Endothelial cell of umbilical vein (primary cell): ENCODE measurements at regions of chr2 and their contacts with region 1.

Region 1: DNA sequence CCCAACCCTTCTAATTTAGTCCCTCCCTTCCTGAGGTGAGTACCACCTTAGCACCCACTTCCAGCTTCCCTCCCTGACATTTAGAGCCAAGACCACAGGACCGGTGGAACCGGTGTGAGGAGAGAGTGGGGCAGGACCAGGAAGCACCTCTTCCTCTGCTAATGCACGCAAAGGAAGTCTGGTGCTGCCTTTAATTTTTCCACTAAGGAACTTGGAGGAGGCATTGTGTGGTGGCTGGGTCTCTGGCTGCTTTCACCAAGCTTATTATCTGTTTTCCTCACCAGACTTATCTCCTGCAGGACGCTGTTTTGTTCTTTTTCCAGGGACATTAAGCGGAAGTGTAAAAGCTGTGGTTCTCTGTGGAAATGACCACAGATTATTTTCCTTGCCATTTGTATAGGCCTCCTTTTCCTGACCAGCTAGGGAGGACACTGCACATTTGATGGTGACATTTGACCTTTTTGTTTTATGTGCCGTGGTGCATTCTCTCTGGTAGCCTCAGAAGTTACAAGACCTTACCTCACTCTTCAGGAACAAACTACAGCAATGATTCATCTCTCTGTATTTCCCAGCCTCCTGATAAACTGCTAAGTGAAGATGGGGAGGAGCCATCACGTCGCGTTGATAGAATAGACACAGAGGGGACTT is 39.8 kb upstream of the SPTBN1 start:
- DNase-seq: peak; percentile 94
- H3K4me3 ChIP-seq: no peak overlapping the region
- H3K27ac ChIP-seq: peak overlapping the region; percentile 74
- H3K4me1 ChIP-seq: peaks cover 44% of the 10 kb centered on the region
- H3K27me3 ChIP-seq: no peaks in the 10 kb centered on the region
- CTCF ChIP-seq: no peak
- POLR2A ChIP-seq: no peak

Region 2: DNA sequence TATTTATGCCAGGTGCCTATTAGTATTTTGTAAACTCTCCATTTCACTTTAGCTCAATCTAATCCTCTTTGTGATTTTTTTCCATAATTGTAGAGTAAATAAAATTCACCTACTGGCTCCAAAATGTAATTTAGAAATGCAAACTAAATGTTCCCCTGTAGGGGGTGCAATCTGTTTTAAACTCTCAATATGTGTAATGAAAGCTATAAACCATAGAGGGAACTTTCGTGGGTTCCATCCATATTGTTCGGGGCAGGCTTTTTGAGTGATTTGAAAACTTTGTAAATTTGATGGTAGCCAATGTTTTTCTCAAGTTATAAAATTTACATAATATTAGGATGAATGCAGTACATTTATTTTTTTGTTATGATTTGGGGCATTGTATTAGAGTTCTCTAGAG is 209.7 kb before region 1 on chr2:
- CTCF ChIA-PET with region 1: no interaction called
- POLR2A ChIA-PET with region 1: no interaction called
- dilution Hi-C with region 1: no loop called
- intact Hi-C with region 1: loop called (anchors 5 kb)
- DNase-seq: peak; percentile 58
- H3K4me3 ChIP-seq: no peak overlapping the region
- H3K27ac ChIP-seq: no peak overlapping the region
- H3K4me1 ChIP-seq: peaks cover 7% of the 10 kb centered on the region
- H3K27me3 ChIP-seq: no peaks in the 10 kb centered on the region
- CTCF ChIP-seq: peak; percentile 29 to 33
- POLR2A ChIP-seq: no peak

Region 3: DNA sequence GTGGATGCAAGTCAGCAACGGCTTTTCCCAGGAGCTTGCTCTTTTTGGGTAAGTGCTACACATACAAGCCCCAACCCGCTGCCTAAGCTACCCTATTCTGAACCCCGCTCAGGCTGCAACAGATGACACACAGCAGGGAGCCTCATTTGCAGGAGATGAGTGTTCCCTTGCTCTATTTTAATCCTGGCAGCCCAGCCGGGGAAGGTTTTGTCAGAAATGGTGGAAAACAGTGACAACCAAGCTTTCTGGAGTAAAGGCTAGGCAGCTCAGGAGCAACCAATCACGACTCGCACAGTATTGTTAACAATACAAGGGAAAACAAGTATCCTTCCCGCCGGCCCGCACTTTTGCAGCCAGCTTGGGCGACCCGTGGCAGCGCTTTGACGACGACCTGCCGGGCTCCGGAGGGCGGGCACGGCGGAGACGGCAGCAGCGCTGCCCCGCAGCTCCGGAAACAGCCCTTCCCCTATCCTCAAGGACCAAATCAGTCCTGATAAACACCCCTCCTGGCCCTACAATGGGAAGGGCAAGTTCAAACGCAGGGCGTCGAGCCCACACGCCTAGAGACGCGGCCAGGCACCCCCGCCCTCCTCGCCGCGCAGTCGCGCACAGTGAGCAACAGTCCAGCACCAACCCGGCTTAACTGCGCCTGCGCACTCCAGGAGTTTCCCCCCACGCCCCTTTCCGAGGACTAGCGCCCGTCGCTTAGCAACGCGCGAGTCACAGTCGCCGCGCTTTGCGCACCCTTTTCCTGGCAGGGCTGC is 85.9 kb before region 1 on chr2:
- CTCF ChIA-PET with region 1: no interaction called
- POLR2A ChIA-PET with region 1: no interaction called
- dilution Hi-C with region 1: no loop called
- intact Hi-C with region 1: loop called (anchors 5 kb)
- DNase-seq: peak; percentile 97
- H3K4me3 ChIP-seq: peak overlapping the region; percentile 7 to 54 (median 44)
- H3K27ac ChIP-seq: peak overlapping the region; percentile 23
- H3K4me1 ChIP-seq: peaks cover 16% of the 10 kb centered on the region
- H3K27me3 ChIP-seq: no peaks in the 10 kb centered on the region
- CTCF ChIP-seq: no peak
- POLR2A ChIP-seq: peak; percentile 80

Region 4: DNA sequence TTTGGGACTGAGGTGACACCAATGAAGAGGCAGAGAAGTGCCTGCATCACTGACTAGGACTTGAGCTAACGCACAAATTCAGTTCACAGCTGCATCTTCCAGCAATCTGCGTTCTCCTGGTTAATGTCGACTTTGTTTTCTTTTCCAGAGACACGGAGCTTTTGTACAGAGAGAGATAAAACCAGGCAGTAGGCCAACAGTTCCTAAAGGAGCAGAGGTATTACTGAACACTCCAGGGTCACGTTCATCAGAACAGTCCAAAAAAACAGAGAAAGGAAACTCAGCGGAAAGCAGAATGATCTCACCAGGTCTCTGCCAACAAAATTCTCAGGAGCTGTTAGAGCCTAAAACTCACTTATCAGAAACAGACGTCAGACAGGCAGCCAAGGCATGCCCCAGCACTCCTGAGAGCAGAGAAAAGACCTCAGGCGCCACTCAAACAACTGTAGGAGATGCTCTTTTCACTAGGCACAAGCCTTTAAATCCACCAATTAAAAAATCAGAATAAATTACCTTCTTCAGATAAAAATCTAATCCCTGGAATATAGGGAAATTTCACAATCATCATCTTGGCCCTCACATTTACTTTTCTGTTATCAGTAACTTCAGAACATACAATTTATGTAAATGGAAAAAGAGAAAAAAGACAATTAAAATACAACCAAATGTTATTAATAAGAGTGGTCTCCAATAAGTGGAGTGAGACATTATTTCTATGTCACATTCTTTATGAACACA is 56.1 kb before region 1 on chr2:
- CTCF ChIA-PET with region 1: interaction called, 3 read pairs
- POLR2A ChIA-PET with region 1: no interaction called
- dilution Hi-C with region 1: no loop called
- intact Hi-C with region 1: loop called (anchors 5 kb)
- DNase-seq: peak; percentile 94
- H3K4me3 ChIP-seq: peak overlapping the region in 1 of 3 experiments; percentile 14
- H3K27ac ChIP-seq: peak overlapping the region; percentile 43
- H3K4me1 ChIP-seq: peaks cover 15% of the 10 kb centered on the region
- H3K27me3 ChIP-seq: no peaks in the 10 kb centered on the region
- CTCF ChIP-seq: no peak
- POLR2A ChIP-seq: no peak

Region 5: GRCh38 chr2:54429811-54430551 is 13.7 kb after region 1 on chr2:
- CTCF ChIA-PET with region 1: interaction called, 3 read pairs
- POLR2A ChIA-PET with region 1: no interaction called
- dilution Hi-C with region 1: no loop called
- intact Hi-C with region 1: loop called (anchors 1 kb)
- DNase-seq: peak; percentile 70
- H3K4me3 ChIP-seq: no peak overlapping the region
- H3K27ac ChIP-seq: peak overlapping the region; percentile 49
- H3K4me1 ChIP-seq: peaks cover 21% of the 10 kb centered on the region
- H3K27me3 ChIP-seq: no peaks in the 10 kb centered on the region
- CTCF ChIP-seq: no peak
- POLR2A ChIP-seq: no peak

Region 6: DNA sequence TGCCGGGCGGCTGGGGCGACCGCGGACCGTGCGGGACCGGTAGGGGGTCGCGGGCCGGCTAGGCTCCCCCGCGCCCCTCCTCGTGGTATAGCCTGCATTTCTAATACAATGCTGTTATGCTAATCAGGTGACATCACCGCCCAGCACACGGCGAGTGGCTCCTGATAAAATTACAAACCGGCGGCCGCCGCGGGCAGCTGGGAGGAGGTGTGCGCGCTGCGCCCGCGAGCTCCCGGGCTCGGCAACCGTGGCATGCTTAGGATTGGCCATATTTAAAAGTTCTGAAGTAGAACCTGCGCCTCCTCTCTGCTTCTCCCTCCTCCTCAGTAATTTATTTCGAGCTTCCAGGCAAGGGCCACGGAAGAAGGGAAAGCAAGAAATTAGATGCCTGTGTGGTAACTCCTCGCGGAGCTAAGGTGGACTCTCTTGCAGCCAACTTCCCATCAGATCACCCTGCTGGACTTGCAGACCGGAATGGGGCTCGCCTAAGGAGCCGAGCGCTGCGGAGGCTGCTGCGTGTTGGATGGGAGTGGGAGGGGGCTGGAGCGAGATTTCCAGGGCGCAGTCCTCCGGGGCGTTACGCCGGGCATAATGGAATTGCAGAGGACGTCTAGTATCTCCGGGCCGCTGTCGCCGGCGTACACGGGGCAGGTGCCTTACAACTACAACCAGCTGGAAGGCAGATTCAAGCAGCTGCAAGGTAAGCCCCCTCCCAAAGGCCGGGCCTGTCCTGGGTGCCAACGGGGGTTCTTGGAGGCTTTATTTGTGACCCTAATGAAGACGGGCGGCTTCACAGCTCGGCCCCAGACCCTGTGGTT is 142.1 kb after region 1 on chr2:
- CTCF ChIA-PET with region 1: no interaction called
- POLR2A ChIA-PET with region 1: no interaction called
- dilution Hi-C with region 1: no loop called
- intact Hi-C with region 1: no loop called
- DNase-seq: peak; percentile 86
- H3K4me3 ChIP-seq: peak overlapping the region; percentile 50 to 99 (median 99)
- H3K27ac ChIP-seq: peak overlapping the region; percentile 99
- H3K4me1 ChIP-seq: peaks cover 42% of the 10 kb centered on the region
- H3K27me3 ChIP-seq: no peaks in the 10 kb centered on the region
- CTCF ChIP-seq: no peak
- POLR2A ChIP-seq: peak; percentile 53

Region 7: DNA sequence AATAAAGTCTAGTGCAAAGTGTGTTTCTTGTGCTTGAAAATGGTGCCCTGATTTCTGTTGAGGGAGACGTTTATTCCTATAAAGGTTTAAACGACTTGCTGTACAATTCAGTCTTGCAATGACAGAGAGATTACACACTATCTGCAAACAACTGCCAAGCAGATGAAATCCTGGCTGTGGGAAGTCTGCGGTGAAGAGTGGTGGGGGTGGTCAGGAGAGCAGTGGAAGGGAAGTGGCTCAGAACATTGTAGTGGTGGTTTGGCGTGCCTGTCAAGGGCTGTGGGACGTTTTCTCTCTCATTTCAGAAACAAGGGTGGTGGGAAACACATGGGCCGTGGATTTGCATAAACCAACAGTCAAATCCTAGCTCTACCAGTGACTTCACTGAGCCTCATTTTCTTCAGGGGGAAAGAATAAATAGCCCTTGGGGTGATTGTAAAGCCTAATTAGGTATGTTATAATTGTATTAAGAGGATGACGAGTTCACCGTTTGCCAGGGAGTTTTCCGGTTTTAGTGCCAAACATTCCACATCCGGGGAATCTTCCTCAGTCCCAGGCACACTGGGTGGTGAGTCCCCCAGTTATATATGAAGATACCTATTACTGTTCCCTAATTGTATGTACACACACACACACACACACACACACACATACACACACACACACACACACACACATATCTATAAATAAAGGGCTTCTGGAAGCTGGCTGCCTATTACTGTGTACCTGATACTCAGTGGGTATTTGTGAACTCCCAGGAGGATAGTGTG is 154.8 kb after region 1 on chr2:
- CTCF ChIA-PET with region 1: no interaction called
- POLR2A ChIA-PET with region 1: no interaction called
- dilution Hi-C with region 1: no loop called
- intact Hi-C with region 1: loop called (anchors 2 kb)
- DNase-seq: peak; percentile 84
- H3K4me3 ChIP-seq: no peak overlapping the region
- H3K27ac ChIP-seq: peak overlapping the region; percentile 100
- H3K4me1 ChIP-seq: peaks cover 66% of the 10 kb centered on the region
- H3K27me3 ChIP-seq: no peaks in the 10 kb centered on the region
- CTCF ChIP-seq: no peak
- POLR2A ChIP-seq: no peak

Region 8: DNA sequence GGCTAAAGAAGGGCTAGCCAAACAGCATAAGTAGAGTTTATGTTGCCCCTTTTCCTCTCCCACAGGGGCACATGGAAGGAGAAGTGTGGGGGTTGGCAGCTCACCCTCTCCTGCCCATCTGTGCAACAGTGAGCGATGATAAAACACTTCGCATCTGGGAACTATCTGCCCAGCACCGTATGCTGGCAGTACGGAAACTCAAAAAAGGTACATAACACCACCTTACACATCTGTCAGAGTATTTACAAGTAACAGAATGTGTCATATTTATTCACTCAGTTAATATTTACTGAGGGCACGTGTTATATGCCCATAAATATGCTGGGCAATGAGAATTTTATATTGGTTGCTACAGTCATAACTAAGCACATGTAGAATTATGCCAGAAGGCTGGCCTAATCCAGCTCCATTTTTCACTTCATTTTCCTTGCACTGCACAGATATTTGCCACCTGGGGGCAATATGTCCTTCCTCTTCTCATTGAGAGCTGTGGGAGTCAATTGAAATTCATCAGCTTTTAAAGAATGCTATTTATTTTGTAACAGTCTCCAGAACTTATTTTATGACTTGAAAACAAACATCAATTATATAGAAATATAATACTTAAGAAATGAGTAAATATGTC is 483.4 kb after region 1 on chr2:
- CTCF ChIA-PET with region 1: no interaction called
- POLR2A ChIA-PET with region 1: no interaction called
- dilution Hi-C with region 1: no loop called
- intact Hi-C with region 1: no loop called
- DNase-seq: peak; percentile 48
- H3K4me3 ChIP-seq: no peak overlapping the region
- H3K27ac ChIP-seq: no peak overlapping the region
- H3K4me1 ChIP-seq: peaks cover 10% of the 10 kb centered on the region
- H3K27me3 ChIP-seq: peaks cover 5 to 6% of the 10 kb centered on the region in 2 experiments
- CTCF ChIP-seq: peak; percentile 31 to 34
- POLR2A ChIP-seq: no peak